IMR-90 (cell line): ENCODE measurements at regions of chr2 and their contacts with region 1.

Region 1: GRCh38 chr2:157194097-157194688 is 63.3 kb upstream of the GALNT5 start:
- DNase-seq: peak; percentile 72
- ATAC-seq: peak; percentile 76
- H3K4me3 ChIP-seq: no peak overlapping the region
- H3K27ac ChIP-seq: no peak overlapping the region; the same call in 1 of the 2 replicates
- H3K4me1 ChIP-seq: peaks cover 5% of the 10 kb centered on the region; the same call in 1 of the 2 replicates
- H3K27me3 ChIP-seq: no peaks in the 10 kb centered on the region
- CTCF ChIP-seq: peak; percentile 86
- POLR2A ChIP-seq: no peak
- RAD21 ChIP-seq: peak; percentile 91

Region 2: GRCh38 chr2:155377266-155377680 is 1816.9 kb before region 1 on chr2:
- CTCF ChIA-PET with region 1: interaction called, 6 read pairs
- POLR2A ChIA-PET with region 1: no interaction called
- dilution Hi-C with region 1: no loop called
- in situ Hi-C with region 1: loop called (anchors 10 kb)
- intact Hi-C with region 1: loop called (anchors 1 kb)
- DNase-seq: peak; percentile 35
- ATAC-seq: no peak
- H3K4me3 ChIP-seq: no peak overlapping the region
- H3K27ac ChIP-seq: no peak overlapping the region
- H3K4me1 ChIP-seq: no peaks in the 10 kb centered on the region
- H3K27me3 ChIP-seq: no peaks in the 10 kb centered on the region
- CTCF ChIP-seq: peak; percentile 43
- POLR2A ChIP-seq: no peak
- RAD21 ChIP-seq: peak; percentile 46

Region 3: GRCh38 chr2:156332534-156333273 is 861.5 kb before region 1 on chr2 and contains the start of gene NR4A2:
- CTCF ChIA-PET with region 1: interaction called, 9 read pairs
- POLR2A ChIA-PET with region 1: no interaction called
- dilution Hi-C with region 1: no loop called
- in situ Hi-C with region 1: no loop called
- intact Hi-C with region 1: loop called (anchors 2 kb)
- DNase-seq: peak; percentile 92
- ATAC-seq: peak; percentile 69
- H3K4me3 ChIP-seq: peak within 1 kb of the TSS; percentile 88
- H3K27ac ChIP-seq: peak within 1 kb of the TSS; percentile 93
- H3K4me1 ChIP-seq: no peaks in the 10 kb centered on the region; the same call in none of the 2 replicates
- H3K27me3 ChIP-seq: no peaks in the 10 kb centered on the region
- CTCF ChIP-seq: no peak
- POLR2A ChIP-seq: peak; percentile 99
- RAD21 ChIP-seq: no peak
- total RNA-seq, gene NR4A2: 0.72 and 2.8 TPM in 2 replicates

Region 4: DNA sequence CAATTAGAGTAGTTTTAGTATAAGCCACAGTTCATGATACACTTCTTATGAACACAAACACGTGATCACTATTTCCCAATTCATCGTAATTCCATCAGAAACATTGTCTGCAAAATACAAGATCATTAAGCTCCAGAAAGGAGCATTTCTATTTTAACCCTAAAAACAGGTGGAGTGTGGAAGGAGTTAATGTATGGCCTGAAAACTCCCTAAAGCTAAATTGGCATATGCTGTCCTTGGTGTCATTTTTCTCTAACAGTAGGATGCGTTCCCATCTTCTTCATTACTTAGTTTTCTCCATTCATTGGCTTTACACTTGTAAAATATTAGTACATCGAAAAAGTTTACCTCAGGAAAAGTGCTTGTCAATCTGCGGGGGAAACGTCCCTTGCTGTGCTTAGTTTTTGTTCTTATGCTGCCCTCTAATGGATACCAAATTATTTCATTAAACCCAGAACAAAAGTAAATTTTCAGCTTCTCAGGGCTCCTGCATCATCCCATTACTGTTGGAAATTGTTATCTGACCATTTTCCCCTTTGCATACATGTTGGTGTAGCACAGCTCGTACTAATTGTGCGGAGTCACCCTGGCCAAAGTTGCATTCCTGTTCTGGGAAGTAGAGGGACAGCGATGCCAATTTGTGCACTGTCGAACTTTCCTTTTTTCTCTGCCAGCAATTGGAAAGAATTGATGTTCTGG is 604.7 kb before region 1 on chr2:
- CTCF ChIA-PET with region 1: interaction called, 4 read pairs
- POLR2A ChIA-PET with region 1: no interaction called
- dilution Hi-C with region 1: no loop called
- in situ Hi-C with region 1: loop called (anchors 10 kb)
- intact Hi-C with region 1: loop called (anchors 2 kb)
- DNase-seq: peak; percentile 62
- ATAC-seq: peak; percentile 74
- H3K4me3 ChIP-seq: no peak overlapping the region
- H3K27ac ChIP-seq: no peak overlapping the region
- H3K4me1 ChIP-seq: no peaks in the 10 kb centered on the region
- H3K27me3 ChIP-seq: no peaks in the 10 kb centered on the region
- CTCF ChIP-seq: peak; percentile 72
- POLR2A ChIP-seq: no peak
- RAD21 ChIP-seq: peak; percentile 85

Region 5: DNA sequence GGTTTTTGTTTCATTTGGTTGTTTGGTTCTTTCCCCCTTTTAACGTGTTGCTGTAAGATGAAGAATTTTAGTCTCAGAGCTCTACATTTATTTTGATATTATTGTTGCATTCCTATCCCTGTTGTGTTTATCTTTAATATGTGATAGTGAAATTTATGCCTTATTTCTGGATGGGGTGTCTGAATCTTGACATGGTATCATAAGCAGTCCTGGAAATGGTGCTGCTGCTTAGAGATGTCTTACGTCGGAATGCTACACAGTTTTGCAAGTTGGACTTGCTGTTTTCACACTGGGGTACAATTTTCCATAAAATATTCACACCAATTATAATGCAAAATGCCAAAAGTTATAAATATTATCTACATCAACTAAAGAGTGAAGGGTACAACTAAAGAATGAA is 594.0 kb before region 1 on chr2:
- CTCF ChIA-PET with region 1: no interaction called
- POLR2A ChIA-PET with region 1: no interaction called
- dilution Hi-C with region 1: no loop called
- in situ Hi-C with region 1: no loop called
- intact Hi-C with region 1: no loop called
- DNase-seq: no peak
- ATAC-seq: no peak
- H3K4me3 ChIP-seq: no peak overlapping the region
- H3K27ac ChIP-seq: no peak overlapping the region
- H3K4me1 ChIP-seq: no peaks in the 10 kb centered on the region
- H3K27me3 ChIP-seq: peaks cover 2% of the 10 kb centered on the region; the same call in 1 of the 2 replicates
- CTCF ChIP-seq: no peak
- POLR2A ChIP-seq: no peak
- RAD21 ChIP-seq: no peak

Region 6: GRCh38 chr2:156818944-156819343 is 375.2 kb before region 1 on chr2:
- CTCF ChIA-PET with region 1: no interaction called
- POLR2A ChIA-PET with region 1: no interaction called
- dilution Hi-C with region 1: no loop called
- in situ Hi-C with region 1: no loop called
- intact Hi-C with region 1: loop called (anchors 5 kb)
- DNase-seq: peak; percentile 67
- ATAC-seq: peak; percentile 81
- H3K4me3 ChIP-seq: no peak overlapping the region
- H3K27ac ChIP-seq: no peak overlapping the region; the same call in 1 of the 2 replicates
- H3K4me1 ChIP-seq: peaks cover 2% of the 10 kb centered on the region; the same call in 1 of the 2 replicates
- H3K27me3 ChIP-seq: no peaks in the 10 kb centered on the region
- CTCF ChIP-seq: no peak
- POLR2A ChIP-seq: no peak
- RAD21 ChIP-seq: no peak

Region 7: GRCh38 chr2:157024129-157024528 is 170.1 kb before region 1 on chr2:
- CTCF ChIA-PET with region 1: no interaction called
- POLR2A ChIA-PET with region 1: no interaction called
- dilution Hi-C with region 1: no loop called
- in situ Hi-C with region 1: no loop called
- intact Hi-C with region 1: no loop called
- DNase-seq: no peak
- ATAC-seq: no peak
- H3K4me3 ChIP-seq: no peak overlapping the region
- H3K27ac ChIP-seq: no peak overlapping the region
- H3K4me1 ChIP-seq: no peaks in the 10 kb centered on the region
- H3K27me3 ChIP-seq: no peaks in the 10 kb centered on the region
- CTCF ChIP-seq: no peak
- POLR2A ChIP-seq: no peak
- RAD21 ChIP-seq: no peak

Region 8: GRCh38 chr2:157055660-157056199 is 138.5 kb before region 1 on chr2:
- CTCF ChIA-PET with region 1: interaction called, 9 read pairs
- POLR2A ChIA-PET with region 1: no interaction called
- dilution Hi-C with region 1: no loop called
- in situ Hi-C with region 1: no loop called
- intact Hi-C with region 1: loop called (anchors 2 kb)
- DNase-seq: peak; percentile 53
- ATAC-seq: 0 out of 2 replicates have a peak, but pooled peaks have one; percentile 19
- H3K4me3 ChIP-seq: no peak overlapping the region
- H3K27ac ChIP-seq: peak overlapping the region; percentile 42; the same call in 1 of the 2 replicates
- H3K4me1 ChIP-seq: peaks cover 7% of the 10 kb centered on the region
- H3K27me3 ChIP-seq: no peaks in the 10 kb centered on the region
- CTCF ChIP-seq: peak; percentile 57
- POLR2A ChIP-seq: no peak
- RAD21 ChIP-seq: peak; percentile 58

Region 9: GRCh38 chr2:157386247-157386646 is 192.1 kb after region 1 on chr2:
- CTCF ChIA-PET with region 1: no interaction called
- POLR2A ChIA-PET with region 1: no interaction called
- dilution Hi-C with region 1: no loop called
- in situ Hi-C with region 1: no loop called
- intact Hi-C with region 1: no loop called
- DNase-seq: no peak
- ATAC-seq: no peak
- H3K4me3 ChIP-seq: no peak overlapping the region
- H3K27ac ChIP-seq: no peak overlapping the region
- H3K4me1 ChIP-seq: no peaks in the 10 kb centered on the region
- H3K27me3 ChIP-seq: no peaks in the 10 kb centered on the region
- CTCF ChIP-seq: no peak
- POLR2A ChIP-seq: no peak
- RAD21 ChIP-seq: no peak